CD4-positive, alpha-beta T cell (primary cell): ENCODE measurements at regions of chr6 and their contacts with region 1.

Region 1: GRCh38 chr6:32190054-32190851 is at the start of gene PBX2:
- DNase-seq: peak; percentile 65 to 96 (median 86)
- ATAC-seq: peak; percentile 51
- H3K4me3 ChIP-seq: peak within 1 kb of the TSS; percentile 96
- H3K4me3 Mint-ChIP-seq: peak within 1 kb of the TSS; percentile 99
- H3K27ac ChIP-seq: peak within 1 kb of the TSS; percentile 93
- H3K27ac Mint-ChIP-seq: peak within 1 kb of the TSS; percentile 96
- H3K4me1 ChIP-seq: peaks cover 74% of the 10 kb centered on the region
- H3K4me1 Mint-ChIP-seq: peaks cover 71% of the 10 kb centered on the region
- H3K27me3 ChIP-seq: no peaks in the 10 kb centered on the region
- H3K27me3 Mint-ChIP-seq: no peaks in the 10 kb centered on the region
- CTCF ChIP-seq: no peak
- total RNA-seq, gene PBX2: 62.0 to 65.6 TPM

Region 2: DNA sequence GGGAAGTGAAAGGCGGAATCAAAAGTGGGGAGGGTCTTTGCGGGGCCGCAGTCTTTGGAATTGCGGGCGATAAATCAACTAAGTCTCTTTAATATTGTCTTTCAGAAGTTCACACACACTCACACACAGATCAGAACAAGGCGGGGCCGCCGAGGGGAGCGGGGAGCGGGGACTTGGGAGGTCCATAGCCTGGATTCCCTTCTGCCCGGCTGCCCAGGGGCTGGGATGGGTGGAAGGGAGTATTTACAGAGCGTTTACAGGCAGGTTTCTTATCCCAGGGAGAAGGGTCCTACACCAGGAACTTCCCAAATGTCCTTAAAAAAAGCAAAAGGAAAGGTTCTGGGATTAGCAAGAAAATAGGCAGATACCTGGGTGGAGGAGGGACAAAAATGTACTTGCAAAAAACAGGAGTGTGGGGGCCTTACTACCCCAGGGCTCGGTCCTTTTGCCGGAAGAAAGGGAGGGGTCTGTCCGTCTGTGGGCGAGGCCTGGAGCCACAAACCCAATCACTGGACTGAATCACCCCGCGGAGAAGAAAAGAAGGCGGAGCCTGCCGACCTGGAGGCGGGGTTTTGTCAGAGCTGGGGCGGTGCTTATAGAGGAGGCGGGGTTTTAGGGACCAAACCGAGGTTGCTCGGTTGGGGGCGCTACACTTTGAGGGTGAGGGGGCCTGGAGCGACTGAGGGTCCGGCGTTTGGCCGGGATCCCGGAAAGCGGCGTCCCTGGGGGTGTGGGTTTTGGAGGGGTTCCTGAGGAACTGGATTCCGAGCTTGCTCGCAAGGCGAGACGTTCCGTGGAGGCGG is 41.8 kb before region 1 on chr6:
- CTCF ChIA-PET with region 1: interaction called, 5 read pairs
- POLR2A ChIA-PET with region 1: interaction called, 4 read pairs
- intact Hi-C with region 1: loop called in 1 of 2 experiments (anchors 5 kb)
- DNase-seq: peak; percentile 42 to 81 (median 69)
- ATAC-seq: peak; percentile 82
- H3K4me3 ChIP-seq: peak overlapping the region; percentile 53
- H3K4me3 Mint-ChIP-seq: peak overlapping the region; percentile 94
- H3K27ac ChIP-seq: no peak overlapping the region
- H3K27ac Mint-ChIP-seq: peak overlapping the region; percentile 86
- H3K4me1 ChIP-seq: peaks cover 45% of the 10 kb centered on the region
- H3K4me1 Mint-ChIP-seq: peaks cover 49% of the 10 kb centered on the region
- H3K27me3 ChIP-seq: peaks cover 11 to 26% of the 10 kb centered on the region in 2 experiments
- H3K27me3 Mint-ChIP-seq: peaks cover 32% of the 10 kb centered on the region
- CTCF ChIP-seq: peak; percentile 39

Region 3: GRCh38 chr6:32522302-32523047 is 332.2 kb after region 1 on chr6:
- CTCF ChIA-PET with region 1: no interaction called
- POLR2A ChIA-PET with region 1: no interaction called
- intact Hi-C with region 1: no loop called
- DNase-seq: no peak
- ATAC-seq: no peak
- H3K4me3 ChIP-seq: no peak overlapping the region
- H3K4me3 Mint-ChIP-seq: no peak overlapping the region
- H3K27ac ChIP-seq: no peak overlapping the region
- H3K27ac Mint-ChIP-seq: no peak overlapping the region
- H3K4me1 ChIP-seq: no peaks in the 10 kb centered on the region
- H3K4me1 Mint-ChIP-seq: no peaks in the 10 kb centered on the region
- H3K27me3 ChIP-seq: no peaks in the 10 kb centered on the region
- H3K27me3 Mint-ChIP-seq: peaks cover 3% of the 10 kb centered on the region
- CTCF ChIP-seq: no peak